Right ventricle myocardium superior (tissue), 1 donor: ENCODE measurements at regions of chr14 and their contacts with region 1.

Region 1: DNA sequence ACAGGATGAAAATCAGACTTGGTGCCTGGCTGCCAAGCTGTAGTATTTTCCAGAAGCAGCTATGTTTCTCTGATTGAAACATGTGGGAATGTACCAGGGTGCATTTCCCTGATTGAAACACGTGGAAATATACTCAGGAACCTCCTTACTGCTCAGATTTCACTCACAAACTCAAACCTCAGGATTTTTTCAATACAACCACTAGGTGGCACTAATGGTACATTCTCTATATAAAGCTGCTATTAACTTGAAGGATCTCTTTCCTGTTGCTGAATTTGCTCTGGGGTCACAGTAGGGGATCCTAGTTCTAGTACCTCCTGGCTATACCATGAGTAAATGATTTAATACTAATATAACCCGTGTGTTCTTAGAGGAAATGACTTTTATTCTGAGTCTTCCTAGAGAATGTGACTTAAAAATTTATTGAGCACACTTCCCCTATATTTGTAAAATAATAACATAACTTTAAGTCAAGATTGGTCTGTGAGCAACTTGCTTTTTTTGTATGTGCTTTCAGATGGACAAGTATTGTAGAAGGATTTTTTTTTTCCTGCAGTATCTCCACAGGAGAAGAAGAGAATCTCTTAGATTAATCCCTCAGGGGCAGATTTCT is 173.8 kb upstream of the MIS18BP1 start:
- DNase-seq: no peak
- ATAC-seq: peak; percentile 71

Region 2: GRCh38 chr14:45526715-45527549 is 100.2 kb after region 1 on chr14:
- intact Hi-C with region 1: loop called (anchors 1 kb)
- DNase-seq: no peak
- ATAC-seq: peak; percentile 81